ENCODE measurements at regions of chr16 and their contacts with region 1.

Region 1: GRCh38 chr16:1428511-1428910 is 2.4 kb upstream of the PERCC1 start:
- DNase-seq: peak; percentile 66

Region 2: GRCh38 chr16:1564325-1564724 is 135.8 kb after region 1 on chr16:
- in situ Hi-C with region 1: loop called (anchors 10 kb)
- DNase-seq: no peak

Region 3: GRCh38 chr16:1942810-1943726 is 514.6 kb after region 1 on chr16 and contains the start of gene MSRB1:
- in situ Hi-C with region 1: no loop called
- DNase-seq: peak; percentile 95